Vagina (tissue), 2 donors: ENCODE measurements at regions of chr12 and their contacts with region 1.

Region 1: DNA sequence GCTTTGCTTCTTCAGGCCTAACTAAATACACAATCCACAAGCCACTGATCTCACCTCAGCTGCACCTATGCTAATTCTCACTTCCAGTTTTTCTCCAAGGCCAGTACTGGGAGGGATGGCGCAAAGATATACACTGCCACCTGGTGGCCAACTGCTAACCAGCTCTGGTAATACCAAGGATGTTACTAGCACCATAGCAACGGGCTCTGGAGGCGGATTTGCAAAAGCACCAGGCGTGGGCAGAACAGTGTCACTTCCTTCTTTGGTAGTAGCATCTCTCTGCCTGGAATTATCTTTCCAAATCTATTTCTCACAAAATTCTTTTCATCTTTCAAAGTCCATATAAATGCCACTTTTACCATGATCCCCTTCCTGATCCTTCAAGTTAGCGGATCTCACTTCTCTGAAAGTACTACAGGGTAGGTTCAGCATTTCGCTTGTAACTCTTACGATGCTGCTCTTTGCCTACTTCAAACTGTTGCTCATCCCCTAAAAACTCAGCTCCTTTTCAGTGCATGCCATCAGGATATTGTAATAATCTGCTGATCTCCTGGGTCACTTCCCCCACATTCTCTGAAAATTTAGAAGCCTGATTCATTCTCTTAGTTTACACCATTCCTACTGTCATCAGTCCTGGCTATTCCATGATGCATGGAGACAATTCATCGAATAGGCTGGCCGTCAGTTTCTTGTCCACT is 37.1 kb upstream of the FOXJ2 start:
- DNase-seq: peak in 1 of 2 donors; percentile 87
- H3K4me3 ChIP-seq: no peak overlapping the region
- H3K27ac ChIP-seq: peak overlapping the region; percentile 63
- H3K4me1 ChIP-seq: no peaks in the 10 kb centered on the region
- H3K27me3 ChIP-seq: no peaks in the 10 kb centered on the region
- CTCF ChIP-seq: peak; percentile 48 to 95 (median 83)
- POLR2A ChIP-seq: no peak

Region 2: GRCh38 chr12:7859552-7859951 is 135.9 kb before region 1 on chr12:
- intact Hi-C with region 1: loop called (anchors 2 kb)
- DNase-seq: no peak
- H3K4me3 ChIP-seq: no peak overlapping the region
- H3K27ac ChIP-seq: no peak overlapping the region
- H3K4me1 ChIP-seq: peaks cover 14% of the 10 kb centered on the region
- H3K27me3 ChIP-seq: no peaks in the 10 kb centered on the region
- CTCF ChIP-seq: no peak
- POLR2A ChIP-seq: no peak

Region 3: DNA sequence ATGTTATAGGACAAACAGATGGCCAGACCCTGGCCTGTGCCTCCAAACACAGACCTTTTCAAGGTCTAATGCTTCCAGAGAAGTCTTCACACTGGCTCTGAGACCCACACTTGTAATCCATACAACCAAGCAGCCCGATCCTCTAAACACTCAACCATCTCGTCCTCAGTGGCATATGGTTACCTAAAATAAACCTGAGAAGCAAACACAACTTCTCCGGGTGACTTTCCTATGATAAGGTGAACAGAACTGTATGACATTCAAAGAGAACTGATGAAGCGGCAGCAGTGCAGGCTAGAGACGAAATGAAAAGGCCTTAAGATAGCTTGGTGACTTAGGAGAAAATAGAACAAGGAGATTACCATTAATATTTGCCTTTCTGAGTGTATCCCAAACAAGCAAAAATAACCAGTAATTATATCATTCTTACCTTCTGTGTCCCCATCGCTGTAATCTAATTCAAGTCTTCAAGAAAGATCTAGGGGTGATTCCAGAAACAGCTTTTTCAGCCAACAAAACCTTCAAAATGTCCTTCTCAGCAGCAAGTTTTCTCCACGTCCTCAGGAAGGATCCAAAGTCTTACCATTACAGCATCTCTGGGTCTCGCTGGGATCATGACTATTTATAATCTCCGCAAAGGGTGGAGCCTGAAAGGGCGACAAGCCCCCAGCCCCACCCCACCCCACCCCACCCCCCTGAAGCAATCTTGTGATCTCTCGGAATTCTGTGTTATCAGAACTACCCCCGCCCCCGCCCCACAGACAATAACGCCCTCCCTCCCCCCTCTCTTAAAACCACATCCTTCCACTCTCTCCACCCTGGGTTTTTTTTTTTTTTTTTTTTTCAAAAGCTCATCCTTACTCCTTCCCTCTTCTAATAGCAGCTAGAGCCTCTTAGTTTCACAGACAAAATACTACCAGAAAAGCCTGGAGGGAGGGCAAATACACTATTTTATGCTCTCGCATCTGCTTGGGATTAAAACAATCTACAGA is 59.5 kb before region 1 on chr12 and contains the start of gene SLC2A3:
- intact Hi-C with region 1: loop called (anchors 2 kb)
- DNase-seq: peak in 1 of 2 donors; percentile 91
- H3K4me3 ChIP-seq: peak within 1 kb of the TSS; percentile 54 to 61
- H3K27ac ChIP-seq: peak within 1 kb of the TSS; percentile 83
- H3K4me1 ChIP-seq: peaks cover 22% of the 10 kb centered on the region
- H3K27me3 ChIP-seq: no peaks in the 10 kb centered on the region
- CTCF ChIP-seq: no peak
- POLR2A ChIP-seq: peak in 1 of 2 donors; percentile 84
- total RNA-seq, gene SLC2A3: 71.7 TPM